Activated CD8-positive, alpha-beta T cell treated with anti-CD3 and anti-CD28 coated beads, Interleukin-2, amount 10 ng/mL, durations not matched to agents 7 days and 5 days (primary cell): ENCODE measurements at regions of chr3 and their contacts with region 1.

Region 1: DNA sequence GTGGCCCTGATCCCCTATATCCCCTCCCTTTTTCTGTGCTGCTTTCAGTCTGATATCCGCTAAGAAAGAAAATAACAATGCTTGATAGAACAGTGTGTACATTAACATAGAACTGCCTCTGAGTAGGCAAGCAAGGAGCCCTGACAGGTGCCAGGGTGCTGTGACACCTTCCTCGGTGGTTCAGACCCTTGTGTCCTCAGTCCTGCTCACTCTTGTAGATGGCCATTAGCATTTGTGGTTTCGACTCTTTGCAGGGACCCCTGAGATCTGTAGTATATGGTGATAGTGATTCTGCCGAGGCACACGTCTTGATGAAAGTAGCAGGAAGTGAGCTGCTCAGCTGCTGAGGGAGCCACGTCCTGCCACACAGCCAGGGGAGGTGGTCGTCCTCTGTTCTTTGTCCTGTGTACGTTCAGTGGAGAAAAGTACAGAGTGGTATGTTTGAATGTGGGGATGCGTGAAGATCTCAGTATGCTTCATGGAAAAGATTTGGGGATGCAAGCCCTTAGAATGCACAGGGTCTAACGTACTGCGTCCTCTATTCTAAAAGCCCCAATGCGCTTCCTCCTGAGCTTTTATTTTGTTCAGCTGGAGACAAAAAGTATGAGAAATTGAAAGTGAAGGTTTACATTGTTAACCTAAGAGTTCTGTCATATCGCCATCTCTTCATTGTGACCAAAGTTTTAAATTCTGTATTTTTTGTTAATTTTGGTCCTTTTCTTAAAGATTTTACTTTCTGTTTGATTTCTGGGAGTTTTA is 35.4 kb downstream of the PXYLP1 start:
- DNase-seq: peak; percentile 70
- ATAC-seq: peak; percentile 89
- H3K4me3 Mint-ChIP-seq: peak overlapping the region; percentile 75
- H3K27ac Mint-ChIP-seq: peak overlapping the region; percentile 95
- H3K4me1 Mint-ChIP-seq: peaks cover 51% of the 10 kb centered on the region
- H3K27me3 Mint-ChIP-seq: no peaks in the 10 kb centered on the region

Region 2: DNA sequence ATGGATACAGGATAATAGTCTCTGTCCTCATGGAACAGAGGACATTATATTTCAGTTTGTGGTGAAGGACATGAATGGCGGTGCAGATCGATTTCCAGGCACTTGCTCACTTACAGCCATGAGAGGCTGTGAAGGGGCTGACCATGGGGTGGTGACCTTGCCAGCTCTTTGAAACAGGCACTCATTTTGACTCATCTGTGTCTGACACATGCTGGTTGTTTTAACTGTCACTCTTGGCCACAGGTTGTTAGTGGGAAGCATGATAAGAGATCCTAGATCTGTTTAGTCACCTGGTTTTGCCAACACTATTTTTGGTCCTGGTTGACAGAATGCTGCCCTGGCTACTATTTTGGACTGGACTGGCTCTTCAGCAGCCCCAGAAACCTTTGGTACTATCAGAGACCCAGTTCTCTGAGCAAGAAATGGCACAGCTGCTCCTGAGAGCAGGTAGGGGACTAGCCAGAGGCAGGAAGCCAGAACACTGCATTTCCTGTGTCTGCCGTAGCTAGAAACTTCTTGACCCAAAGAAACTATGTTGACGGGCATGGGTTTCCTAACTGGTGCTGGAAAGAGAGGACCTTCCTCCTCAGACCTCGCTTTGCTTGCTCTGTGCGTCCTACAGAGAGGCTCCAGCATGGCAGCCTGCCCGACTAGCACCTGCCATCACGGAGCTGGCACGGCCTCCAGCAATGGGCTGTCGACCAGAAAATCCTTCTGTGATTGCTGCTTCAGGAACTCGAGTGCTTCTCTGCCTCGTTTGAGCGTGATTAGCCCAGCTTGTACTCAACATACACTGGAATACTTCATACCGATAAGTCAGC is 29.1 kb before region 1 on chr3:
- CTCF ChIA-PET with region 1: interaction called, 86 read pairs
- POLR2A ChIA-PET with region 1: interaction called, 60 read pairs
- DNase-seq: peak; percentile 37
- ATAC-seq: peak; percentile 63
- H3K4me3 Mint-ChIP-seq: peak overlapping the region; percentile 41
- H3K27ac Mint-ChIP-seq: peak overlapping the region; percentile 88
- H3K4me1 Mint-ChIP-seq: peaks cover 89% of the 10 kb centered on the region
- H3K27me3 Mint-ChIP-seq: no peaks in the 10 kb centered on the region

Region 3: GRCh38 chr3:141243271-141243707 is 23.7 kb before region 1 on chr3:
- CTCF ChIA-PET with region 1: interaction called, 11 read pairs
- POLR2A ChIA-PET with region 1: interaction called, 39 read pairs
- DNase-seq: peak; percentile 84
- ATAC-seq: peak; percentile 98
- H3K4me3 Mint-ChIP-seq: peak overlapping the region; percentile 54
- H3K27ac Mint-ChIP-seq: peak overlapping the region; percentile 78
- H3K4me1 Mint-ChIP-seq: peaks cover 51% of the 10 kb centered on the region
- H3K27me3 Mint-ChIP-seq: no peaks in the 10 kb centered on the region

Region 4: GRCh38 chr3:141255846-141256261 is 11.1 kb before region 1 on chr3:
- CTCF ChIA-PET with region 1: interaction called, 40 read pairs
- POLR2A ChIA-PET with region 1: interaction called, 11 read pairs
- DNase-seq: peak; percentile 66
- ATAC-seq: peak; percentile 98
- H3K4me3 Mint-ChIP-seq: no peak overlapping the region
- H3K27ac Mint-ChIP-seq: peak overlapping the region; percentile 66
- H3K4me1 Mint-ChIP-seq: peaks cover 25% of the 10 kb centered on the region
- H3K27me3 Mint-ChIP-seq: no peaks in the 10 kb centered on the region

Region 5: DNA sequence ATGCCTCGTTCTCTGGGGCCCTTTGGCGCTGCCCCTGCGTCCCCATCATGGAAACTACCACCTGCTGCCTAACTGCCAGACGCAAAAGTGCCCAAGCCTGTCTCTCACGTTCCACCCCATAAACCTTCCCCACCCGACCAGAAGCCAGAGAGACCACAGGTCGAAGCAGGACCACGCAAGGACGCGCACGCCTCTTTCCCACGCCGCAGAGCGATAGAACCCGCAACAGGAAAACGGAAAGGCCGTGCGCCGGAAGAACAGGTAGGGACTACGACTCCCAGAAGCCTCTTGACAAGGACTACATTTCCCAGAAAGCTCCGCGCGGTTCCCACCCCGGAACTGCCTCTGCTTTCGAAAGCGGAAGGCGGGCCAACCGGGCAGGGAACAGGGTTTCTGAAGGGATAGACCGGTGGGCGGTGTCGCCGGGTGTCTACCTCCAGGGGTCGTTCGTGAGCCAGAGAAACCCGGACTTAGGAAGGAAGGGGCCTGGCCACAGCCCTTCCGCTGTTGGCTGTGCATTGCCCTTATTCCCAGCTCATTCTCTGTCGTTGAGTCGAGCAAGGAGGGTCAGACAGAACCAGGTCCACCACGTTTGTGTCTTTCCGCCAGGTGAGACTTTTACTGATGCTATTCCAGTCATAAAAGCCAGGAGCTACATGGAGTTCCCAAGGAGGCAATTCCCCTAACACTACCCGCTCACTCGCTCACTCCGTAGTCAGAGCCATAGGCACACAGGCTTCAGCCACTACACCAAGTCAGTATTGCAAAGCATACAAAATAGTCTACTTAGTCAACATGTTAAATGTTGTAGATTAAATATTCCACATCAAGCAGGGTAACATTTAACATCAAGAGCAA is 44.7 kb after region 1 on chr3:
- CTCF ChIA-PET with region 1: interaction called, 3 read pairs
- POLR2A ChIA-PET with region 1: interaction called, 10 read pairs
- DNase-seq: peak; percentile 100
- ATAC-seq: peak; percentile 95
- H3K4me3 Mint-ChIP-seq: peak overlapping the region; percentile 85
- H3K27ac Mint-ChIP-seq: peak overlapping the region; percentile 99
- H3K4me1 Mint-ChIP-seq: peaks cover 57% of the 10 kb centered on the region
- H3K27me3 Mint-ChIP-seq: no peaks in the 10 kb centered on the region

Region 6: DNA sequence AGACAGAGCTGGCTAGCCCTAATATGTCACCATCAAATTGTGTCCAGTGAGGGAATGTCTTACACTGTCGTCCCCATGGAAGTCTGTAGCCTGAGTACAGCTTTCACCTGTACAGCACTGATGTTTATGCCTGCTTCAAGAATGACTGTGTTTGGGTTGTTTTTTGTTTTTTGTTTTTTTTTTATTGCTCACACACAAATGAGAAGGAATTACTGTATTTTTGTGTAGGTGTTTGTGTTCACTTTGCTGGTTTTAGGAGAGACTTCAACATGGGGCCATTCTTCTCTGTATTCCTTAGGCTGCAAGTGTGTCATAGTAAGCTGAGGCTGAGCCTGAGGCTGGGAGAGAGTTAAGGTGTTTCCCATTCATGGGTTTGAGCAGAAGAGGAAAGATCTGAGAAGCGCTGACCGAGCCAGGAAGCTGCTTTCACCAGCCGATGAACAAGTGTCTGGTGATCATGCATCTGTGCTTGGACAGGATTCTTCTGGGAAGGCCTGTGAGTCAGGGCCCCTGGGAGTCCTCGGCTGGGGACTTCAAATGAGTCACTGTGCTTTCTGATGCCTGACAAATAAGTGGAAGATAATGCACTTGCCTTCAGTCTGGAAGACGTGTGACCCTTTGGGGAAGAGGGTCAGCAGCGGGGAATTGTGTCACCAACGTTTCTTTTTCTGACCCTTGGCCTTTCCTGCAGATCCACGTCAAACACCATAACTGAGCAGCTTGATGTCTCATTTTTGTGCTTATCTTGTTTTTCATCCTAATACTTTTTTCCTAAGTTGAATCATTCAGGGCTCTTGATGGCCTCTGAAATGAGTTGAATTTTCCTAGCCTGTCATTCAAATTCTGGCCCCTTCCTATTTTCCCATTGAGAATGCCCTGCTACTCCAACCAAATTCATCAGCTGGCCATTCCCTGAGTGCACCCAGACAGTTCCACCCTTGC is 64.7 kb after region 1 on chr3:
- CTCF ChIA-PET with region 1: no interaction called
- POLR2A ChIA-PET with region 1: no interaction called
- DNase-seq: no peak
- ATAC-seq: no peak
- H3K4me3 Mint-ChIP-seq: no peak overlapping the region
- H3K27ac Mint-ChIP-seq: no peak overlapping the region
- H3K4me1 Mint-ChIP-seq: no peaks in the 10 kb centered on the region
- H3K27me3 Mint-ChIP-seq: no peaks in the 10 kb centered on the region